ENCODE measurements at regions of chr4 and their contacts with region 1.

Region 1: DNA sequence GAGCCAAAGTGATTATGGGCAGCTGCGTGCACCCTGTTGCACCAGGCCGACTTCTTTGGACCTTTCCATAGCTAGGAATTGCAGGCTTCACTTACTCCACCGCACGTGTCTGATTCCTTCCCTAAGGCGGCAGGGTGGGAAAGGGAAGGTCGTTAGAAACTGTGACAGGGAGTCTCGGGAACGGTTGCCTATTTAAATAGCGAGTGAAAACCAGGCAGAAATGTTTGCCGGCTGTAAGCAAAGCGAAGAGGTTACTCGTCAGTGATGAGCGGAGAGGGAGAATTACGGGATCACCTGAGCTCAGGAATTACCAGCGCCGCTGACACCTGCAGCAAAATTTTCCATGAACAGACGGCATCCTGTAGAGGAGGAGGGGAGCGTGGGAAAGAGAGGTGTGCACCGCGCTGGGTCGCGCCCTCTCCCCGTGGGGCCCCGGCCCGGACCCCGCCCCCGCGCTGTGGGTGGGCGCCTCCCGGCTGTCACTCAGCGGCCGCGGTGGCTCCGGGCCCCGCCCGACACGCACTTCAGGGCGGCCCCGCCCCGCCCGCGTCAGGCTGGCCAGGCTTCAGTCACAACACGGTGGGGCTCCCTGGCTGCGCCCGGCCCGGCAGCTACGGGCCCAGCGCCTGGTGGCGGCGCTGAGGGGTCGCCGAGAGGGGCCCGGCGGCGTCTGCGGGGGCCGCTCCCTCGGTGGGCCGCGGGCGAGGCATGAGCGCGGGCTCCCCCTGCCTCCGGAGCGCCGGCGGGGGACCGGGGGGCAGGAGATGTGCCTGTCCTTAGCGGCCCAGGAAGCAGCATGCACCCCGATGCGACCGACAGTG is at the start of gene SNX25:
- DNase-seq: peak; percentile 81
- H3K4me3 Mint-ChIP-seq: peak within 1 kb of the TSS; percentile 88
- H3K27ac Mint-ChIP-seq: peak within 1 kb of the TSS; percentile 84
- H3K4me1 Mint-ChIP-seq: peaks cover 34% of the 10 kb centered on the region
- H3K27me3 Mint-ChIP-seq: peaks cover 15% of the 10 kb centered on the region
- total RNA-seq, gene SNX25: 24.1 and 25.0 TPM in 2 replicates

Region 2: DNA sequence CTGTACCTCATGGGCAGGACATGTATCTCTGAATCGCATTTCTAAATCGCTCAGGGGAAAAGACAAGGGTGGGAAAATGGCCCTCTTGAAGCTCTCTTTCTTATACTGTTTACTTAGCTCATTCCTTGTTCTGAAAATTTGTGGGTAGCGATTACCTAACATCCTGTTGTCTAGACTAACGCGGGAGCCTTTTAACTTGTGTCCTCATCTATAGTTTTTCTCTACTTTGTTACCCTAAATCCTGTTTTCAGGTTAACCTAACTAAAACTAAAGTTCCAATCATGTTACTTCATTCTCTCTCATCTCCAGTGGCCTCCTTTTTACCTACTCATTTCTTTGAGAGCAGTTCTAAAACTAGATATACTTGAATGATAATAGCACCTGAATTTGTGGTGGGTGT is 45.2 kb after region 1 on chr4:
- intact Hi-C with region 1: loop called (anchors 5 kb)
- DNase-seq: no peak
- H3K4me3 Mint-ChIP-seq: no peak overlapping the region
- H3K27ac Mint-ChIP-seq: peak overlapping the region; percentile 1
- H3K4me1 Mint-ChIP-seq: peaks cover 33% of the 10 kb centered on the region
- H3K27me3 Mint-ChIP-seq: no peaks in the 10 kb centered on the region

Region 3: DNA sequence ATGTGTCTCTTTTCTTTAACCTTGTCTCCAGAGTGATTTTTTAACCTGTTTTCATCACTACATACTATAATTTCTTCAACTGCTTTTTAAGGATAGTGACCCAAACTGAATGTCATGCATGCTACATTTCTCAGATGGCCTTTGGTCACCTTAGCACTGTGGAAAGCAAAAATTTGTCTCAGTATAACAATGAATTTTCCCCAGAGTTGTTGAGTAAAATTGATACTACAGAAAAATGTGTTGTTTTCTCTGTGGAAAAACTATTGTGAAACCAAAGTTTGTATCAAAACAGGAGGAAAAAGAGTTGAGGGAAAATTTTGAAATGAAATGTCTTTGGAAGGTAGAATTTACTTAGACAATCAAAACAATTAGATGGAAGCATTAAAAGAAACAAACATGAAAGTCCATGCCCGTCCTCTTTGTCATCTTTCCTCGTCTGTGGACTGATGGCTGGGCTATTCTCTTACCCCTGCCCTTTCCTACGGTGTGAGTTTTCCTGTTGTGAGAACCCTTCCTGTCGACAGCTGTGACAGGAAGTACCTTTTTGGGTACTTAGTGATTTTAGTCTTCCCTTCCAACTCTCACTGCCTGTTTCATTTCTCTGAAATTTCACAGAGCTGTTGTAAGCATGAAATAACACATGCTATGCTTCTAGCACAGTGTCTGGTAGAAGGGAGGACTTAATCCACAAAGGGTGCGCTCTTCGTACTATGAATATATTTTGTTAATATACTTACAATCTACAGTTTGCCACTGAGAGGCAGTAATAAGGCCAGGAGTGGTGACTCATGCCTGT is 135.7 kb after region 1 on chr4:
- intact Hi-C with region 1: no loop called
- DNase-seq: no peak
- H3K4me3 Mint-ChIP-seq: no peak overlapping the region
- H3K27ac Mint-ChIP-seq: peak overlapping the region; percentile 86
- H3K4me1 Mint-ChIP-seq: peaks cover 39% of the 10 kb centered on the region
- H3K27me3 Mint-ChIP-seq: no peaks in the 10 kb centered on the region